ENCODE measurements at regions of chr3 and their contacts with region 1.

Region 1: GRCh38 chr3:148075763-148076716 is 621.7 kb upstream of the AGTR1 start:
- DNase-seq: peak; percentile 49
- H3K4me3 ChIP-seq: peak overlapping the region in 1 of 2 experiments; percentile 10; a peak in 1 of 4 replicates
- H3K27ac ChIP-seq: no peak overlapping the region
- H3K4me1 ChIP-seq: peaks cover 0 to 10% of the 10 kb centered on the region in 2 experiments; a peak in 2 of 4 replicates
- H3K27me3 ChIP-seq: no peaks in the 10 kb centered on the region
- CTCF ChIP-seq: peak; percentile 88
- EP300 ChIP-seq: peak in 1 of 2 experiments; percentile 19; a peak in 1 of 4 replicates
- RAD21 ChIP-seq: peak; percentile 88

Region 2: GRCh38 chr3:147391781-147392624 is 684.0 kb before region 1 on chr3:
- CTCF ChIA-PET with region 1: interaction called, 11 read pairs
- POLR2A ChIA-PET with region 1: no interaction called
- DNase-seq: peak; percentile 91
- H3K4me3 ChIP-seq: peak overlapping the region; percentile 62 to 69
- H3K27ac ChIP-seq: peak overlapping the region; percentile 71 to 91
- H3K4me1 ChIP-seq: peaks cover 0 to 2% of the 10 kb centered on the region in 2 experiments; a peak in 1 of 4 replicates
- H3K27me3 ChIP-seq: peaks cover 50% of the 10 kb centered on the region; the same call in 1 of the 2 replicates
- CTCF ChIP-seq: peak; percentile 51
- EP300 ChIP-seq: no peak
- RAD21 ChIP-seq: peak; percentile 56